ENCODE measurements at regions of chr4 and their contacts with region 1.

Region 1: DNA sequence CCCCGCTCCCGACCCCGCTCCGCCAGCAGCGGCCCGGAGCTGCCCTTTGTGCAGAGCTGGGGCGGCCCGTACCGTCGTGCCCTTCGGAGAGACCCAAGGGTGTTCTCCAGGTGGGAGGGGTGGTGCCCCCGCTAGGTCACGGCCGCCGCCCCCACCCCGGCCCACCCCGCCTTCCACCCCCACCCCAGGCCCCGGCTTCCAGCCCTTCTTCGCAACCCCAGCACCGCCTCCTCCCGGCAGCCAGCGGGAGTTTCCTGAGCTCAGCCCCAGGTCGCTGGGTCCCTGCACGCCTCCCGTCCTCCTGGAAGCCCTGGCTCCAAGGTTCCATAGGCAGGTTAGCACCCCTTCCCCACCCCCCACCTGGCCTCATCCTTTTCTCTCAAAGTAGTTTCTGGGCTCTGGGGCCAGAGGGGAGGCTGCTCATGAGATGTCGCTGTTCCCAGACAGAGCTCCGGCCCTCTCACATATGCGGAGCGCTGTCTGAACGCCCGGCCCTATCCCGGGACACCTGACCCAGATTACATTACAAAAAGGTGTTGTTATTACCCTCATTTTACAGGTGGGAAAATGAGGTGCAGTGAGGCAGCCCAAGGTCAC is 25.2 kb upstream of the FGFR3 start:
- DNase-seq: peak; percentile 95
- H3K4me3 ChIP-seq: peak overlapping the region in 1 of 2 experiments; percentile 52; a peak in 2 of 4 replicates
- H3K27ac ChIP-seq: no peak overlapping the region; a peak in 1 of 4 replicates
- H3K4me1 ChIP-seq: peaks cover 0 to 19% of the 10 kb centered on the region in 2 experiments; a peak in 1 of 4 replicates
- H3K27me3 ChIP-seq: no peaks in the 10 kb centered on the region
- CTCF ChIP-seq: peak; percentile 37
- EP300 ChIP-seq: no peak
- RAD21 ChIP-seq: peak; percentile 27; the same call in 1 of the 2 replicates

Region 2: GRCh38 chr4:1752284-1753041 is 15.4 kb before region 1 on chr4:
- CTCF ChIA-PET with region 1: interaction called, 19 read pairs
- POLR2A ChIA-PET with region 1: no interaction called
- DNase-seq: no peak
- H3K4me3 ChIP-seq: no peak overlapping the region
- H3K27ac ChIP-seq: no peak overlapping the region
- H3K4me1 ChIP-seq: peaks cover 0 to 35% of the 10 kb centered on the region in 2 experiments; a peak in 1 of 4 replicates
- H3K27me3 ChIP-seq: no peaks in the 10 kb centered on the region
- CTCF ChIP-seq: no peak
- EP300 ChIP-seq: no peak
- RAD21 ChIP-seq: no peak

Region 3: GRCh38 chr4:1777822-1778641 is 10.2 kb after region 1 on chr4:
- CTCF ChIA-PET with region 1: interaction called, 17 read pairs
- POLR2A ChIA-PET with region 1: no interaction called
- DNase-seq: no peak
- H3K4me3 ChIP-seq: no peak overlapping the region
- H3K27ac ChIP-seq: no peak overlapping the region
- H3K4me1 ChIP-seq: peaks cover 0 to 27% of the 10 kb centered on the region in 2 experiments; a peak in 1 of 4 replicates
- H3K27me3 ChIP-seq: no peaks in the 10 kb centered on the region
- CTCF ChIP-seq: no peak
- EP300 ChIP-seq: no peak
- RAD21 ChIP-seq: no peak

Region 4: DNA sequence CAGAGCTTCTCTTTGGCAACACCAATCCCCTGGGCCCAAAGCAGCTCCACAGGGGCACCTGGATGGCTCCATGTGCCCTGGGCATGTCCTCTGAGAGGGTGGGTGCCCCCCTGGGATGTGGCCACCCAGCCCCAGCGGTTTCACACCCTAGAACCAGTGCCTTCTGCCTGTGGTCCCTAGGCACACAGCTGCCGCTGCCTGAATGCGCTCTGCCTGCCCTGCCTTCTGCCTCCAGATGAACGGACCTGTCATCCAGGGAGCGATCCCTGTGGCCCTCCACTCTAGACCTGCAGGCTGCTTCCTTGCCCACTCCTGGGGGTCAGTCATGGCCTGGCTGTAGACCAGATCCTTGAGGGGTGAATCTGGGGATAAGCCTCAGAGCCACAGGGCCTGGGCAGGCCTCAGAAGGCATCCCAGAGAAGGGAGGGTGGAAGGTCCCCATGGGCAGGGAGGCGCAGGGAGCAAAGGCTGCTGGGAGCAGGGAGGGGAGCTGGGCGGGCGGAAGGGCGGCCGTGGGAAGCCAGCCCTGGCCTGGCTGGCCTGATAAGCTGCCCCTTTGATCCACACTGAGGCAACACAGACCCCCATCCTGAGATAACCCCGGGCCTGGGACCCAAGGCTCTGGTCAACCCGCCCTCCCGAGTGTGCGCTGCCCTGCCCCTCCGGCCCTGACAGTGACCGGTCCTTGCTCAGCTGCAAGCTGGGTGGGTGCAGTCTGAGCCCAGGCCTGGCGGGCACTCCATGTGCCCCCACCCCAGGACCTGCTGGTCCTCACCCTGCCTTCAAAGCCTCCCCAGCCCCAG is 17.1 kb after region 1 on chr4:
- CTCF ChIA-PET with region 1: interaction called, 17 read pairs
- POLR2A ChIA-PET with region 1: no interaction called
- DNase-seq: peak; percentile 90
- H3K4me3 ChIP-seq: no peak overlapping the region
- H3K27ac ChIP-seq: no peak overlapping the region
- H3K4me1 ChIP-seq: peaks cover 0 to 8% of the 10 kb centered on the region in 2 experiments; a peak in 1 of 4 replicates
- H3K27me3 ChIP-seq: no peaks in the 10 kb centered on the region
- CTCF ChIP-seq: no peak
- EP300 ChIP-seq: no peak
- RAD21 ChIP-seq: no peak